ENCODE measurements at regions of chr6 and their contacts with region 1.

Region 1: GRCh38 chr6:125191916-125192609 is 38.5 kb downstream of the TPD52L1 start:
- DNase-seq: peak; percentile 58
- ATAC-seq: peak; percentile 87
- H3K4me3 ChIP-seq: no peak overlapping the region
- H3K27ac ChIP-seq: no peak overlapping the region
- H3K4me1 ChIP-seq: peaks cover 18 to 44% of the 10 kb centered on the region in 2 experiments; a peak in 3 of 4 replicates
- H3K27me3 ChIP-seq: no peaks in the 10 kb centered on the region
- CTCF ChIP-seq: peak; percentile 61 to 83 (median 79); a peak in 5 of 6 replicates
- POLR2A ChIP-seq: no peak
- RAD21 ChIP-seq: peak; percentile 70

Region 2: DNA sequence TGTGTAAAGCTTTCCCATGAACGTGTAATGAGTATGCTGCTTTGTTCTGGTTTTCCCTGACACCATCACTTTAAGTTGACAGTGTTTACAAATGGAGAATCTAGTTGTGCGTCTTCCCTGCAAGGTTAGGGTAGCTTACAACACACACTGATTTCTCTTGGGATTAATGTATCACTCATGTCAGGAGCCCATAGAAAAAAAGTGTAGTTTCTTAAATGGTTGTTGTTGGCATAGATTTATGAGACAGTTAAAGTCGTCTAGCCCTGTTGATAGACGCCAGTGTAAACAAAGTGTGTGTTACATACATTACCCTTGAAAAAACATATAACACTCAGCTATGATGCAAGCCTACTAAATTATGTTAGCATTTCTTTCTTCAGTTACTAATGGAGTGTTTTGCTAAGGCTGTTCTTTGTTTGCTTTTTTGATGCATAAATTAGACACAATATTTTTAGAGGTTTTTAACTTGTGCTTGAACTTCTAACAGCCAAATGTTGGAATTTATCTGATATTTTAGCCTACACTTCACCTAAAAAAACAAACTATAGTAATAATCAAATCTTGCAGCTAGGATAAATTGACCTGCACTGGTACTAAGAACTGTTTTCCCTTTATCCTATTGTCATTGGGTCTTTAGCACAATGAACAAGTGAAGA is 141.3 kb before region 1 on chr6:
- CTCF ChIA-PET with region 1: no interaction called
- POLR2A ChIA-PET with region 1: no interaction called
- RAD21 ChIA-PET with region 1: no interaction called
- intact Hi-C with region 1: no loop called
- DNase-seq: no peak
- ATAC-seq: no peak
- H3K4me3 ChIP-seq: no peak overlapping the region
- H3K27ac ChIP-seq: no peak overlapping the region
- H3K4me1 ChIP-seq: no peaks in the 10 kb centered on the region
- H3K27me3 ChIP-seq: no peaks in the 10 kb centered on the region
- CTCF ChIP-seq: no peak
- POLR2A ChIP-seq: no peak
- RAD21 ChIP-seq: no peak

Region 3: GRCh38 chr6:125301435-125302391 is 109.7 kb after region 1 on chr6 and contains the start of gene HDDC2:
- CTCF ChIA-PET with region 1: no interaction called
- POLR2A ChIA-PET with region 1: no interaction called
- RAD21 ChIA-PET with region 1: no interaction called
- intact Hi-C with region 1: loop called (anchors 5 kb)
- DNase-seq: peak; percentile 28
- ATAC-seq: peak; percentile 88
- H3K4me3 ChIP-seq: peak within 1 kb of the TSS; percentile 79 to 88
- H3K27ac ChIP-seq: peak within 1 kb of the TSS; percentile 86
- H3K4me1 ChIP-seq: peaks cover 0 to 16% of the 10 kb centered on the region in 2 experiments; a peak in 3 of 4 replicates
- H3K27me3 ChIP-seq: no peaks in the 10 kb centered on the region
- CTCF ChIP-seq: no peak
- POLR2A ChIP-seq: peak; percentile 89
- RAD21 ChIP-seq: 0 out of 2 replicates have a peak, but pooled peaks have one; percentile 1
- total RNA-seq, gene HDDC2: 95.6 TPM

Region 4: DNA sequence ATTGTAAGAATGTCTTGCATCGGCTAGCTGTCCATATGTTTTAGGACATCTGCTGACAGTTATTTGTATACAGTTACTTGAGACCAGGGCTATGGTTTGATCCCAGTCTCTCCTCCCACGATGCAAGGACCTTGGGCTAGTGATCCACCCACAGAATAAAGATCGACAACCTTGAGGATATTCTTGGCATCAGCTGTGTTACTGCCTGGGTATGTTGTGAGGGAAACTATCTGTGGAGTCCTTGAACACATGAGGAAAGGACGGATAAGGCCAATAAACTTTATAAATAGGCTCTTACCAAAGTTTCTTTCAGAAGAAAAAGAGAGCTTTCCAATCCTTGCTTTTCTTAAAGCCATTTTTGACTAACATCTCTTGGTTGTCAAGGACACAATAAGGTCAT is 486.5 kb after region 1 on chr6:
- CTCF ChIA-PET with region 1: no interaction called
- POLR2A ChIA-PET with region 1: no interaction called
- RAD21 ChIA-PET with region 1: no interaction called
- intact Hi-C with region 1: no loop called
- DNase-seq: no peak
- ATAC-seq: no peak
- H3K4me3 ChIP-seq: no peak overlapping the region
- H3K27ac ChIP-seq: no peak overlapping the region
- H3K4me1 ChIP-seq: no peaks in the 10 kb centered on the region
- H3K27me3 ChIP-seq: peaks cover 46% of the 10 kb centered on the region
- CTCF ChIP-seq: no peak
- POLR2A ChIP-seq: no peak
- RAD21 ChIP-seq: no peak

Region 5: DNA sequence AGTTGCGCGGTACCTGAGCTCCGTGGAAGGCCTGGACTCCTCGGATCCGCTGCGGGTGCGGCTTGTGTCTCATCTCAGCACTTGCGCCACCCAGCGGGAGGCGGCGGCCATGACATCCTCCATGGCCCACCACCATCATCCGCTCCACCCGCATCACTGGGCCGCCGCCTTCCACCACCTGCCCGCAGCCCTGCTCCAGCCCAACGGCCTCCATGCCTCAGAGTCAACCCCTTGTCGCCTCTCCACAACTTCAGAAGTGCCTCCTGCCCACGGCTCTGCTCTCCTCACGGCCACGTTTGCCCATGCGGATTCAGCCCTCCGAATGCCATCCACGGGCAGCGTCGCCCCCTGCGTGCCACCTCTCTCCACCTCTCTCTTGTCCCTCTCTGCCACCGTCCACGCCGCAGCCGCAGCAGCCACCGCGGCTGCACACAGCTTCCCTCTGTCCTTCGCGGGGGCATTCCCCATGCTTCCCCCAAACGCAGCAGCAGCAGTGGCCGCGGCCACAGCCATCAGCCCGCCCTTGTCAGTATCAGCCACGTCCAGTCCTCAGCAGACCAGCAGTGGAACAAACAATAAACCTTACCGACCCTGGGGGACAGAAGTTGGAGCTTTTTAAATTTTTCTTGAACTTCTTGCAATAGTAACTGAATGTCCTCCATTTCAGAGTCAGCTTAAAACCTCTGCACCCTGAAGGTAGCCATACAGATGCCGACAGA is 567.3 kb after region 1 on chr6:
- CTCF ChIA-PET with region 1: no interaction called
- POLR2A ChIA-PET with region 1: no interaction called
- RAD21 ChIA-PET with region 1: no interaction called
- intact Hi-C with region 1: loop called (anchors 10 kb)
- DNase-seq: peak; percentile 33
- ATAC-seq: peak; percentile 97
- H3K4me3 ChIP-seq: no peak overlapping the region
- H3K27ac ChIP-seq: no peak overlapping the region
- H3K4me1 ChIP-seq: peaks cover 0 to 6% of the 10 kb centered on the region in 2 experiments; a peak in 1 of 4 replicates
- H3K27me3 ChIP-seq: peaks cover 55% of the 10 kb centered on the region
- CTCF ChIP-seq: peak; percentile 53 to 85 (median 75); a peak in 5 of 6 replicates
- POLR2A ChIP-seq: no peak
- RAD21 ChIP-seq: peak; percentile 48

Measured in HCT116 (cell line).